ENCODE measurements at regions of chr11 and their contacts with region 1.

Region 1: GRCh38 chr11:61908730-61909315 is 8.5 kb downstream of the RAB3IL1 start:
- DNase-seq: peak in 3 of 6 donors; percentile 40 to 63 (median 54)
- ATAC-seq: peak in 3 of 4 donors; percentile 10 to 29 (median 19)
- H3K4me3 ChIP-seq: no peak overlapping the region
- H3K27ac ChIP-seq: no peak overlapping the region
- H3K4me1 ChIP-seq: no peaks in the 10 kb centered on the region
- H3K27me3 ChIP-seq: no peaks in the 10 kb centered on the region
- CTCF ChIP-seq: no peak

Region 2: DNA sequence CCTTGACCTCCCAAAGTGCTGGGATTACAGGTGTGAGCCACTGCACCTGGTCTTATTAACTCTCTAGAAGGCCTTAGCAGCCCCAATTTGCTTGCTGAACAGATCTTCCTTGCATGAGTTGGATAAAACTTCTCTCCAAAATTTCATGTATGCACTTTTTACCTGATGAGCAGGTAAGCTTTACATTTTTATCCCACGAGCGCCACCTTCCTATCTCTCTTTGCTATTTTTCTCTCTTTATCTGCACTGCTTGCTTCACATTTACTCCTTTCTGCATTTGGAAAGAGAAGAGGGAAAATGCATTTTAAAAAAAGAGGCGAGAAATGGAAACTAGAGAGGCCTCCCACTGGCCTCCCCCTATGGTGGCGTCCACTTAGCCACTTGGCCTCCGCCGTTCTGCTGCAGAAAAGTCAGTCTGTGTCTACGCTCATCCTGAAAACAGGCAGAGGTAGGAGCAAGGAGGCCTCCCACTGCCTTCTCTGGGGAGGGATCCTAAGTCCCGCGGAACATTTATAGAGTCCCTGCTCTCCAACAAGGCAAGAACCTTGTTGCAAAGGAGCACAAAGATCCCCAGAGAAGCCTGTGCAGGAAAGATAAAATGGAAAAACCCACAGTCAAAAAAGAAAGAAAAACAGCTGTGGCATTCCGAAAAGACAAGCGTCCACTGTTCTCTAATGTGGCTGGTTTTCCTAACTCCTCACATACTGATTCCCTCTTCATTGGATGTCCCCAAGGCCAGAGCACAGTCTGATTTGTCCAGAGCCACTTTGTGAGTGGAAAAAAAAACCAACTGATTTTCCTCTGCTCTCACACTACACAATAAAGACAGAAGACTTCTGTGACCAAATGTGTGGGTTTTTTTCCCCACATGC is 152.8 kb after region 1 on chr11:
- intact Hi-C with region 1: loop called in 1 of 3 experiments (anchors 10 kb)
- DNase-seq: peak in 1 of 6 donors; percentile 29
- ATAC-seq: peak in 2 of 4 donors; percentile 67 to 75
- H3K4me3 ChIP-seq: no peak overlapping the region
- H3K27ac ChIP-seq: no peak overlapping the region
- H3K4me1 ChIP-seq: no peaks in the 10 kb centered on the region
- H3K27me3 ChIP-seq: no peaks in the 10 kb centered on the region
- CTCF ChIP-seq: peak in 2 of 4 donors; percentile 22 to 25

Measured in pancreas (tissue), 10 donors.